H1 (cell line): ENCODE measurements at regions of chr19 and their contacts with region 1.

Region 1: GRCh38 chr19:14432791-14433553 is at the start of gene PKN1:
- DNase-seq: peak in 1 of 2 experiments; percentile 86
- H3K4me3 ChIP-seq: peak within 1 kb of the TSS; percentile 54 to 96 (median 68)
- H3K27ac ChIP-seq: no peak within 1 kb of the TSS
- H3K4me1 ChIP-seq: peaks cover 0 to 11% (median 3%) of the 10 kb centered on the region in 4 experiments; a peak in 5 of 7 replicates
- H3K27me3 ChIP-seq: no peaks in the 10 kb centered on the region; a peak in 1 of 7 replicates
- CTCF ChIP-seq: no peak
- EP300 ChIP-seq: 0 out of 3 replicates have a peak, but pooled peaks of 1 of the 2 experiments have one; percentile 23
- POLR2A ChIP-seq: peak in 1 of 2 experiments; percentile 30; a peak in 1 of 3 replicates
- RAD21 ChIP-seq: no peak
- total RNA-seq, gene PKN1: 161 and 162 TPM in 2 replicates

Region 2: DNA sequence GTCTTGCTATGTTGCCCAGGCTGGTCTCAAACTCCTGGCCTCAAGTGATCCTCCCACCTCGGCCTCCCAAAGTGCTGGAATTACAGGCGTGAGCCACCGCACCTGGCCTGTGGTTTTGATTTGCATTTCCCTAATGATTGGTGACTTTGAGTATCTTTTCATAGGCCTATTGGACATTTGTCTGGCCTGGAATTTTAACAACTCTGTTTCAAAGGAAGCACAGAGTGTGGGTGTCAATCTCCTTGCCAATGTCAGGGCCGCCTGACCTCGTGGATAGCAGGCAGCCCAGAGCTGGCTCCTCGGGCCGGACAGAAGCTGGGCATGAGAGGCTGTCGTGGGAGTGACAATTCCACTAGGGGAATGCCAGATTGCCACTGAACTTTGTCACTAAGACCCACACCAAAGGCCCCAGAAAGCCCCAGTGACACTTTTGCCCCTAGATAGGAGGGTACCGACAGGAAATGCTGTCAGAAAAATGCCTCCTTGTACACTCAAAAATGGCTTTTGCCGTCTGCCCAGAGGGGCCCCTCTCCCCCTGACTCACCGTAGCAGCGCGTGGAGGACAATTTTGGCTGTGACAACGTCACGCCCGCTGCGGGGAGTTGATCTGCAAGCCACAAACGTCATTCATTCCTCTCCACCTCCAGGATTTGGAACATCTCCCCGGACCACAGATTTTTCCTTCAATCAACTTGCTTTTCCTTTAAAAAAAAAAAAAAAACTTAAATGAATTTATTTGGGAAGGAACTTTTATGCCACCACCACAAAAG is 63.4 kb before region 1 on chr19:
- CTCF ChIA-PET with region 1: no interaction called
- POLR2A ChIA-PET with region 1: no interaction called
- DNase-seq: no peak
- H3K4me3 ChIP-seq: no peak overlapping the region
- H3K27ac ChIP-seq: no peak overlapping the region
- H3K4me1 ChIP-seq: peaks cover 0 to 6% (median 2%) of the 10 kb centered on the region in 4 experiments; a peak in 4 of 7 replicates
- H3K27me3 ChIP-seq: no peaks in the 10 kb centered on the region
- CTCF ChIP-seq: no peak
- EP300 ChIP-seq: no peak
- POLR2A ChIP-seq: no peak
- RAD21 ChIP-seq: no peak

Region 3: DNA sequence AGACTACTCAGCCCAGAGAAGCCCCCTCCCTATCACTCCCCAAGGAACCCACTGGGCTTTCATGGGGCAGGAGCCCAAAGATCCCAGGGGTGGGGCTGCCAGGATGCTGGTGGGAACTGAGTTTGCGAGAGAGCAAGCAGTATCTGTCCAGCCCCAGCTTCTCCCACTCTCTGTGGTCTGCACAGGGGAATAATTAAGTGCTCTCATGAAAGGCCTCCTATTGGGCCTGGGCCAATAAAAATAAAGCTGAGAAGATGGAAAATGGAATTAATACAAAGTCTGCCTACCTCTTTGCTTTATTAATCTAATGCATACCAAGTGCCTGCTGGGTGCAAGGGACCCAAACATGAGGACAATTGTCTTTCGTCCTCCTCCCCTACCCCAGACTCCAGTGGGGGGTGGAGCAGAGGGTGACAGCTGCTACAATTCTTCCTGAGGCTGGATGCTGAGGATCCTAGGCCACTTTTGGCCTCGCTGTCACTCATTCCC is 19.2 kb before region 1 on chr19:
- CTCF ChIA-PET with region 1: interaction called, 10 read pairs
- POLR2A ChIA-PET with region 1: interaction called, 22 read pairs
- DNase-seq: no peak
- H3K4me3 ChIP-seq: no peak overlapping the region
- H3K27ac ChIP-seq: no peak overlapping the region
- H3K4me1 ChIP-seq: peaks cover 0 to 6% (median 0%) of the 10 kb centered on the region in 4 experiments; a peak in 3 of 7 replicates
- H3K27me3 ChIP-seq: no peaks in the 10 kb centered on the region
- CTCF ChIP-seq: no peak
- EP300 ChIP-seq: no peak
- POLR2A ChIP-seq: no peak
- RAD21 ChIP-seq: no peak

Region 4: DNA sequence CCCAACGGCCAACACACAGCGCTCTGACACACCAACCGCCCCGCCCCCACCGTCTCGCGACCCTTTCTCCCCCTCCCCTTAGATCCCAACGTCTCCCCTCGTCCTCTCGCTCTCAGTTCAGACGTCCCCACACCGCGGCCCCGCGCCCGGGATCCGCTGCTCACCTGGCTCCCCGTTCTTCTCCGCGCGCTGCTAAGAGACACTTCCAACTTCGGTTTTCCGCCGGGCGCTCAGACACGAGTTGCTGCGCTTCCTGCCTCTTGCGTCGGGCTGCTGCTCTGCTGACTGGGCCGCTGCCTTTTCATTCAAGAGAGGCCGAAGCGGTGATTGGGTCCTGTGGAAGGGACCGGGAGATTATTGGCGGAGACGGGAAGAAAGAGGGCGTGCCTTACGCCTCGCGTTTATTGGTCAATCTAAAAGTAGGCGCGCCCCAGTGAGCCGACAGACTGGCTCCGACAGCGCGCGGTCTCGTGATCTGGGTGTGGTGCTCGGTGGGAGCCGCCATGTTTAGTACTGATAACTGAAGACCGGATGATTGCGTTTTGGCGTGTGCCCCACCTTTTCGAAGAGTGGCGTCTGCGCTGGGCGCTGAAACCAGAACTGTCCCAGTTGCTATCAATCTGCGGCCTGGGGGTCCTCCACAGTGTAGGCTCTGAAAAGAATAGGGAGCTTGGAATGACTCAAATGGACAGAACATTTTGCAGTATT is 13.7 kb before region 1 on chr19 and contains the start of gene DDX39A:
- CTCF ChIA-PET with region 1: interaction called, 10 read pairs
- POLR2A ChIA-PET with region 1: interaction called, 22 read pairs
- DNase-seq: peak; percentile 90 to 94
- H3K4me3 ChIP-seq: peak within 1 kb of the TSS; percentile 65 to 83 (median 77)
- H3K27ac ChIP-seq: peak within 1 kb of the TSS; percentile 79
- H3K4me1 ChIP-seq: peaks cover 0 to 6% (median 2%) of the 10 kb centered on the region in 4 experiments; a peak in 4 of 7 replicates
- H3K27me3 ChIP-seq: no peaks in the 10 kb centered on the region
- CTCF ChIP-seq: no peak
- EP300 ChIP-seq: no peak
- POLR2A ChIP-seq: peak in 1 of 2 experiments; percentile 89; a peak in 2 of 3 replicates
- RAD21 ChIP-seq: no peak
- total RNA-seq, gene DDX39A: 124 and 139 TPM in 2 replicates

Region 5: GRCh38 chr19:14450168-14450874 is 17.3 kb after region 1 on chr19:
- CTCF ChIA-PET with region 1: interaction called, 19 read pairs
- POLR2A ChIA-PET with region 1: interaction called, 5 read pairs
- DNase-seq: peak; percentile 94 to 99
- H3K4me3 ChIP-seq: no peak overlapping the region
- H3K27ac ChIP-seq: no peak overlapping the region
- H3K4me1 ChIP-seq: peaks cover 0 to 4% (median 0%) of the 10 kb centered on the region in 4 experiments; a peak in 1 of 7 replicates
- H3K27me3 ChIP-seq: no peaks in the 10 kb centered on the region
- CTCF ChIP-seq: no peak
- EP300 ChIP-seq: no peak
- POLR2A ChIP-seq: no peak
- RAD21 ChIP-seq: no peak

Region 6: DNA sequence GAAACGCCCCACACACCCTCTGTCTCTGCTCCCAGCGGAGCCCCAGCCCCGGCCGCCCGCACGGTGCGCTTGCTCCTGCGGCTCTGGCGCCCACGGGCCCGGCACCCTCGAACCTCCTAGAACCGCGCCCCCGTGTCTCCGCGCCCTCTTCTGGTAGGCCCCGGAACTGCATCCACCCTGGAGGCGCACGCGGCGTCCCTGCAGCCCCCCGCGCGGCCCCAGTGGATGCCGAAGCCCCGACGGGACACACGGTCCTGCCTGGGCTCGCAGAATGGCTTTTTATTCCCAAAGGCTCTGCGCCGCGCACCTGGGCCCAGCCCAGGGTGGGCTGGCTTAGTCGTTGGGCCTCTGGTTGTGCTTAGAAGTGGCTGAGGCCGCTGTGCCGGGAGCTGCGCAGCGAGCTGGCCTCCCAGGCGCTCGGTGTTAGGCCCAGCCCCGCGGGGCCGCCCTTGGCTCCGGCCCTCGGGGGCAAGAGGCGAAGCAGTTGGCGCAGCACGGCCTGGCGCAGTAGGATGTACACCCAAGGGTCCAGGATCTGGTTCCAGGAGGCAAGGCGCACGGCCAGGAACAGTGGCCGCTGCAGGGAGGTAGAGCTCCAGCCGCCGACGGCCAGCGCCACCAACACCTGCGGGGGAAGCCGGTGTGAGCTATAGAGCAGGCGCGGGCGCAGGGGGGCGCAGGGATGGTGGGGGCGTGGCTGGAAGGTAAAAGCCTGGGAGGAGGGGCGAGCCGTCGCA is 39.4 kb after region 1 on chr19:
- CTCF ChIA-PET with region 1: interaction called, 15 read pairs
- POLR2A ChIA-PET with region 1: interaction called, 3 read pairs
- DNase-seq: peak in 1 of 2 experiments; percentile 98
- H3K4me3 ChIP-seq: peak overlapping the region; percentile 29 to 62 (median 40)
- H3K27ac ChIP-seq: no peak overlapping the region; the same call in 1 of the 2 replicates
- H3K4me1 ChIP-seq: peaks cover 0 to 21% (median 15%) of the 10 kb centered on the region in 4 experiments; a peak in 6 of 7 replicates
- H3K27me3 ChIP-seq: no peaks in the 10 kb centered on the region
- CTCF ChIP-seq: peak; percentile 80 to 90 (median 84)
- EP300 ChIP-seq: no peak
- POLR2A ChIP-seq: no peak
- RAD21 ChIP-seq: peak; percentile 30 to 56; a peak in 3 of 4 replicates

Region 7: DNA sequence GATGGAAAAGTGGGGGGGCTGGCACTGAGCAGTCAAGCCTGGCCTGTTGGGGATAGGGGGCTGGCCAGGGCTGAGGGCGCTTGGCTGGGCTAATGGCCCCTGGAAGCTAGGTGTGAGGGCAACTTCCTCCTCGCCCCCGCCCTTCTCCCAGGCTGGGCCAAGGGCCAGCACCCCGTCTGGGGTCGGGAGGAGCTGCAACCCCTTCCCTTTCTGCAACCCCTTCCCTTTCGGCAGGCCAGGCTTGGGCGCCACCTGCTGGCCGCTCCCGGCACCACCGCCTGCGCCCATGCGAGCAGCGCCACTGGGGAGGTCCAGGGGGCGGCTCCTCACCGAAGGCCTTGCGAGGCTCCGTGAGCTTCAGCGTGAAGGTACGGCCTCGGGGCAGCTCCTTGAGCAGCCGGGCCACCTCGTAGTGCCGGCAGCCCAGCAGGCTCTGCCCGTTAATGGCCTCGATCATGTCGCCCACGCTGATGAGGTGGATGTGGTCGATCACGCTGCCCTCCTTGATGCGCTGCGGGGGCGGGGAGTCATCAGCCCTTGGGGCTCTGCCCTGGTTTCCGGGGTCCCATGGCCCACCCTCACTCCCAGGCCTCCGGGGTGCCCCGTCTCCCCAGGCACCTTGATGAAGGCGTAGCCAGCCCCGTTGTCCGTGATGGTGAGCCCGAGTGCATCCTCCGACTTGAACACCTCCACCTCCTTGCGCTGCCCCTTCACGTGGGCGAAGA is 47.2 kb after region 1 on chr19:
- CTCF ChIA-PET with region 1: interaction called, 14 read pairs
- POLR2A ChIA-PET with region 1: interaction called, 3 read pairs
- DNase-seq: peak in 1 of 2 experiments; percentile 99
- H3K4me3 ChIP-seq: no peak overlapping the region; a peak in 1 of 8 replicates
- H3K27ac ChIP-seq: 0 out of 2 replicates have a peak overlapping the region, but pooled peaks have one; percentile 12
- H3K4me1 ChIP-seq: peaks cover 0 to 21% (median 9%) of the 10 kb centered on the region in 4 experiments; a peak in 6 of 7 replicates
- H3K27me3 ChIP-seq: no peaks in the 10 kb centered on the region
- CTCF ChIP-seq: peak; percentile 95 to 98 (median 98)
- EP300 ChIP-seq: 0 out of 3 replicates have a peak, but pooled peaks of 1 of the 2 experiments have one; percentile 45
- POLR2A ChIP-seq: no peak
- RAD21 ChIP-seq: peak; percentile 66 to 79